SK-N-SH (cell line): ENCODE measurements at regions of chr1 and their contacts with region 1.

Region 1: DNA sequence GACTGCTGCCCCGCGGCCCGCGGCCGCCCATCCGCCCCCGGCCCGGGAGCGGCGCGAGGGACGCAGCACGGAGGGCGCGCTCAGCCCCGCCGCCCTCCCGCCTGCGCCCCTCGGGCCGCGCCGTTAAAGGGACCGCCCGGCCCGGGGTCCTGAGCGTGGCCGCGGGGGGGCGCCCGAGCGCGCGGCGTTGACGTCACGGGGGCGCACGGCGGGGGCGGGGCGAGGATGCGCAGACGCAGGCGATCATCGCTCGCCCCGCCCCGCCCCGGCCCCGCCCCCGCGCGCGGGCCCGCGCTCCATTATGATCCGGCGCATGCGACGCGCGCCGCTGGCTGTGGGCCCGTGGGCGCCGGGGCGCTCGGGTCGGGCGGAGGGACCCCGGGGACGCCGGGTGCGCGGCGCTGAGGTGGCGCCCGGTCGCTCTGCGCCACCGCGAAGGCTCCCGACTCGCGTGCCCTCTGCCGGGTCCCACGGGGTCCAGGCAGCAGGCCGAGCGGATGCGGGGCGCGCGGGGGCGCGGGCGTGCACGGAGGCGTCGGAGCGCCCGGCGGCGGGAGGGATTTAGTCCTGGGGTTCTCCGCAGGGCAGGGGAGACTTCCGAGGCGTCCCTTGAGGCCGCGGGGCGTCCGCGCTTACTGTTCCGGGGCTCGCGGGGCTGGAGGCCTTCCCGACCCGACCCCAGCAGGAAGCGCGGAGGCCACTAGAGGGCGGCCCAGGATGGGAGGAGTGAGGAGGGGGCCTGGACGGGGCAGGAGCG is at the start of gene DVL1:
- DNase-seq: peak; percentile 98
- H3K4me3 ChIP-seq: peak within 1 kb of the TSS; percentile 67 to 87
- H3K27ac ChIP-seq: peak within 1 kb of the TSS in 1 of 2 experiments; percentile 90; a peak in 2 of 4 replicates
- H3K4me1 ChIP-seq: peaks cover 0 to 45% of the 10 kb centered on the region in 2 experiments; a peak in 1 of 4 replicates
- H3K27me3 ChIP-seq: no peaks in the 10 kb centered on the region
- CTCF ChIP-seq: peak; percentile 55
- EP300 ChIP-seq: no peak
- RAD21 ChIP-seq: peak; percentile 46
- polyA plus RNA-seq, gene DVL1: 31.3 and 32.0 TPM in 2 replicates

Region 2: DNA sequence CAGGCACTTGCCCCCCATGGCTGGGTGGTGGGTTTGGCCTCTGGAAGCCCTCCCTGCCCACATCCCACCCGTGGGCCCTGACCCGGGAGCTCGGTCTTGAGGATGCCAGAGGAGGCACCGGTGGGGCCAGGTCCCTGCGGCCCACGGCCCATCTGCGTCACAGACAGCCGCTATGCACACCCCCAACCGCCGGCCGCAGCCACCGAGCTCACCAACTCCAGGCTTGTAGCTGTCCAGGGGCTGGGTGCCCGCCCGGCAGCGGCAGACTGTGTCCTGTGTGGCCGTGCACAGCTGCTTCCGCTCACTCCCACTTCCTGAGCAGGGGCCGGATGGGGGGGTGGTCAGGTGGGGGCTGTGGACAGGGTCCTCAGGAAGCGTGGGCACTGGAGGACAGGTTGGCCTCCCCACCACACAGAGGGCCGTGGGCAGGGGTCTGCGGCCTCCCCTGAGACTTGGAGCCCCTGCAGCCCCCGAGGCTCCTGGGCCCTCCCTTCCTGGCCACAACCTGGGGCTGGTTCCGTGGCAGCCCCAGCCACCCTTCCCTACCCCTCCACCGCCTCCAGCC is 136.6 kb before region 1 on chr1:
- CTCF ChIA-PET with region 1: no interaction called
- POLR2A ChIA-PET with region 1: no interaction called
- DNase-seq: peak; percentile 43
- H3K4me3 ChIP-seq: no peak overlapping the region
- H3K27ac ChIP-seq: no peak overlapping the region
- H3K4me1 ChIP-seq: peaks cover 3 to 5% of the 10 kb centered on the region in 2 experiments; a peak in 1 of 4 replicates
- H3K27me3 ChIP-seq: no peaks in the 10 kb centered on the region
- CTCF ChIP-seq: no peak
- EP300 ChIP-seq: no peak
- RAD21 ChIP-seq: no peak

Region 3: GRCh38 chr1:1333551-1334241 is 15.7 kb before region 1 on chr1:
- CTCF ChIA-PET with region 1: interaction called, 16 read pairs
- POLR2A ChIA-PET with region 1: no interaction called
- DNase-seq: no peak
- H3K4me3 ChIP-seq: no peak overlapping the region
- H3K27ac ChIP-seq: no peak overlapping the region
- H3K4me1 ChIP-seq: peaks cover 0 to 15% of the 10 kb centered on the region in 2 experiments; a peak in 1 of 4 replicates
- H3K27me3 ChIP-seq: no peaks in the 10 kb centered on the region
- CTCF ChIP-seq: no peak
- EP300 ChIP-seq: no peak
- RAD21 ChIP-seq: no peak